Endothelial cell of umbilical vein (primary cell): ENCODE measurements at regions of chr11 and their contacts with region 1.

Region 1: GRCh38 chr11:123246749-123247495 is 51.9 kb upstream of the CLMP start:
- DNase-seq: peak; percentile 68
- H3K4me3 ChIP-seq: no peak overlapping the region
- H3K27ac ChIP-seq: no peak overlapping the region
- H3K4me1 ChIP-seq: no peaks in the 10 kb centered on the region
- H3K27me3 ChIP-seq: peaks cover 0 to 4% of the 10 kb centered on the region in 2 experiments
- CTCF ChIP-seq: peak; percentile 96 to 98
- POLR2A ChIP-seq: no peak

Region 2: GRCh38 chr11:123103326-123103980 is 143.5 kb before region 1 on chr11:
- CTCF ChIA-PET with region 1: interaction called, 587 read pairs
- POLR2A ChIA-PET with region 1: interaction called, 6 read pairs
- dilution Hi-C with region 1: loop called (anchors 25 kb)
- intact Hi-C with region 1: loop called (anchors 1 kb)
- DNase-seq: peak; percentile 75
- H3K4me3 ChIP-seq: no peak overlapping the region
- H3K27ac ChIP-seq: no peak overlapping the region
- H3K4me1 ChIP-seq: peaks cover 2% of the 10 kb centered on the region
- H3K27me3 ChIP-seq: no peaks in the 10 kb centered on the region
- CTCF ChIP-seq: peak; percentile 58 to 62
- POLR2A ChIP-seq: no peak

Region 3: GRCh38 chr11:123122341-123122740 is 124.6 kb before region 1 on chr11:
- CTCF ChIA-PET with region 1: interaction called, 587 read pairs
- POLR2A ChIA-PET with region 1: no interaction called
- dilution Hi-C with region 1: loop called (anchors 25 kb)
- intact Hi-C with region 1: no loop called
- DNase-seq: no peak
- H3K4me3 ChIP-seq: peak overlapping the region in 1 of 3 experiments; percentile 40
- H3K27ac ChIP-seq: peak overlapping the region; percentile 44
- H3K4me1 ChIP-seq: peaks cover 22% of the 10 kb centered on the region
- H3K27me3 ChIP-seq: no peaks in the 10 kb centered on the region
- CTCF ChIP-seq: no peak
- POLR2A ChIP-seq: no peak

Region 4: GRCh38 chr11:123166071-123166559 is 80.8 kb before region 1 on chr11:
- CTCF ChIA-PET with region 1: interaction called, 46 read pairs
- POLR2A ChIA-PET with region 1: no interaction called
- dilution Hi-C with region 1: no loop called
- intact Hi-C with region 1: loop called (anchors 1 kb)
- DNase-seq: no peak
- H3K4me3 ChIP-seq: no peak overlapping the region
- H3K27ac ChIP-seq: no peak overlapping the region
- H3K4me1 ChIP-seq: no peaks in the 10 kb centered on the region
- H3K27me3 ChIP-seq: peaks cover 0 to 1% of the 10 kb centered on the region in 2 experiments
- CTCF ChIP-seq: peak; percentile 49 to 53
- POLR2A ChIP-seq: no peak

Region 5: GRCh38 chr11:123188508-123189165 is 58.3 kb before region 1 on chr11:
- CTCF ChIA-PET with region 1: interaction called, 16 read pairs
- POLR2A ChIA-PET with region 1: no interaction called
- dilution Hi-C with region 1: no loop called
- intact Hi-C with region 1: no loop called
- DNase-seq: peak; percentile 73
- H3K4me3 ChIP-seq: no peak overlapping the region
- H3K27ac ChIP-seq: no peak overlapping the region
- H3K4me1 ChIP-seq: peaks cover 11% of the 10 kb centered on the region
- H3K27me3 ChIP-seq: peaks cover 0 to 4% of the 10 kb centered on the region in 2 experiments
- CTCF ChIP-seq: peak in 1 of 2 donors; percentile 13
- POLR2A ChIP-seq: no peak

Region 6: GRCh38 chr11:123235117-123235655 is 11.7 kb before region 1 on chr11:
- CTCF ChIA-PET with region 1: interaction called, 12 read pairs
- POLR2A ChIA-PET with region 1: no interaction called
- dilution Hi-C with region 1: no loop called
- intact Hi-C with region 1: no loop called
- DNase-seq: peak; percentile 41
- H3K4me3 ChIP-seq: no peak overlapping the region
- H3K27ac ChIP-seq: no peak overlapping the region
- H3K4me1 ChIP-seq: no peaks in the 10 kb centered on the region
- H3K27me3 ChIP-seq: no peaks in the 10 kb centered on the region
- CTCF ChIP-seq: peak; percentile 64 to 68
- POLR2A ChIP-seq: no peak

Region 7: DNA sequence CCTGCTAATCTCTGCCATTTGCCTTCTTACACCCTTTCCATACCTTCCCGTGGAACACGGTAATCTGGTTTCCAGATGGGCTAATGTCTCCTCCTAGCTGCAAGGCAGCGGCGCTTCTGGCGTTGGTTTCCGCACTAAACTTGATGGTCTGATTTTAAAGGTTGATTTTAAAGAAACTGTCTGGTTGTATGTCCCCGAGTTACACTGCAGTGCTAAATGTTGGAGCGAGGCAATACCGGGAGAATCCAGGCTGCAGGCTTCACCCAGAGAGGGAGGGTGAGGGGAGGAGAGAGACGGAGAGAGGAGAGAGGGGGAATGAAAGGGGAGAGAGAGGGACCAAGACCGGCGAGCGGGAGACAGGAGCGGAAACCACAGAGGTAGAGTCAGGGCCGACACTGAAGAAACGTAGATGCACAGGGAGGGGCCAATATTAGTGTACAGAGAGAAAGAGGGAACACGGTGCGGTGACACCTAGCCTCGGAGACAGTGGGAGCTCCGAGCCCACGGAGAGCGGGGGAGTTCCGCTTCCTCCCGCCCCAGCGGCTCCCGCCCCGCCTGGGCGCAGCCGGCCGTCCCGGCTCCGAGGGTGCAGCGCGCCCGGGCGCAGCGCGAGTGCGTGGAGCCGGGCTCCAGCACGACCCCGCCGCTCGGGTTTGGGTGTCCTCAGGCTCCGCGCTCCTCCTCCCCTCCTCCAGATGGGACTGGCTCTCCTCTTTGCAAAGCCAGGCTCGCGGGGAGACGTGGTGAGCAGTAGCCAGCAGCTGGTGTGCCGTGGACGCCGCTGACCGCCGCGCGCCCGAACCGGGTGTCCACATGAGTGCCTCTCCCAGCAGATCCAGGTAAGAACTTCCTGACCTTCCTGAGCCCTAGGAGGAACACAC is 111.3 kb after region 1 on chr11:
- CTCF ChIA-PET with region 1: no interaction called
- POLR2A ChIA-PET with region 1: no interaction called
- dilution Hi-C with region 1: no loop called
- intact Hi-C with region 1: no loop called
- DNase-seq: no peak
- H3K4me3 ChIP-seq: no peak overlapping the region
- H3K27ac ChIP-seq: no peak overlapping the region
- H3K4me1 ChIP-seq: no peaks in the 10 kb centered on the region
- H3K27me3 ChIP-seq: peaks cover 27 to 34% of the 10 kb centered on the region in 2 experiments
- CTCF ChIP-seq: no peak
- POLR2A ChIP-seq: no peak

Region 8: DNA sequence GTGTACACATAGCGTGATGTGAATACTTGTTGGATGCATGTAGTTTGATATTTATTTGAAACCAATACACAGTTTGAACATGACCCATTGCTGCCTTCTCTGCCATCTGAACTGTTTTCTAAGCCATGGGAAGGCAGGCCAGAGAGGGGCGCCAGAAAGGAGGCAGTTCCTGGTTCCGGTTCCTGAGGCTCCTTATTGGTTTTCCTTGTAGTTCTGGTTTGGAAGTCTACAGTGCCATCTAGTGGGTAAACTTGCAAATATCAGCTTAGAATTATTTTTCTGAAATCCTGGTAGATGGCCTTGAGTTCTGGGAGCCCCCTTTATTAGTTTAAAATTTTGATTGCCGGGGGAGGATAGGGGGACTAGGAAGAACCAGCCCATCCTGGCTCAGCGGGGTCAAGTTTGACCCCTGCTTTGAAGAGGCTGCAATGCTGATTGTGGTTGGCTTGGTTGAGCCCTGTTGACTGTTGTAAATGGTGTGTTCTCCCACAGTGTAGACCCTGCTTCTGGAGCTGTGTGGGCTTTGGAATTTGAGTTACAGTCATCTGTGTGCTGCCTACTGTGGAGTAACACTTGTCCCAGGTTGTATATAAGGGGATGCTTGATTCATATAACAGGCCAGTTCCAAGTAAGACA is 231.5 kb after region 1 on chr11:
- CTCF ChIA-PET with region 1: interaction called, 31 read pairs
- POLR2A ChIA-PET with region 1: no interaction called
- dilution Hi-C with region 1: no loop called
- intact Hi-C with region 1: loop called (anchors 1 kb)
- DNase-seq: peak; percentile 76
- H3K4me3 ChIP-seq: no peak overlapping the region
- H3K27ac ChIP-seq: no peak overlapping the region
- H3K4me1 ChIP-seq: peaks cover 25% of the 10 kb centered on the region
- H3K27me3 ChIP-seq: no peaks in the 10 kb centered on the region
- CTCF ChIP-seq: peak; percentile 54 to 58
- POLR2A ChIP-seq: no peak